Sigmoid colon (tissue), 7 donors: ENCODE measurements at regions of chr12 and their contacts with region 1.

Region 1: DNA sequence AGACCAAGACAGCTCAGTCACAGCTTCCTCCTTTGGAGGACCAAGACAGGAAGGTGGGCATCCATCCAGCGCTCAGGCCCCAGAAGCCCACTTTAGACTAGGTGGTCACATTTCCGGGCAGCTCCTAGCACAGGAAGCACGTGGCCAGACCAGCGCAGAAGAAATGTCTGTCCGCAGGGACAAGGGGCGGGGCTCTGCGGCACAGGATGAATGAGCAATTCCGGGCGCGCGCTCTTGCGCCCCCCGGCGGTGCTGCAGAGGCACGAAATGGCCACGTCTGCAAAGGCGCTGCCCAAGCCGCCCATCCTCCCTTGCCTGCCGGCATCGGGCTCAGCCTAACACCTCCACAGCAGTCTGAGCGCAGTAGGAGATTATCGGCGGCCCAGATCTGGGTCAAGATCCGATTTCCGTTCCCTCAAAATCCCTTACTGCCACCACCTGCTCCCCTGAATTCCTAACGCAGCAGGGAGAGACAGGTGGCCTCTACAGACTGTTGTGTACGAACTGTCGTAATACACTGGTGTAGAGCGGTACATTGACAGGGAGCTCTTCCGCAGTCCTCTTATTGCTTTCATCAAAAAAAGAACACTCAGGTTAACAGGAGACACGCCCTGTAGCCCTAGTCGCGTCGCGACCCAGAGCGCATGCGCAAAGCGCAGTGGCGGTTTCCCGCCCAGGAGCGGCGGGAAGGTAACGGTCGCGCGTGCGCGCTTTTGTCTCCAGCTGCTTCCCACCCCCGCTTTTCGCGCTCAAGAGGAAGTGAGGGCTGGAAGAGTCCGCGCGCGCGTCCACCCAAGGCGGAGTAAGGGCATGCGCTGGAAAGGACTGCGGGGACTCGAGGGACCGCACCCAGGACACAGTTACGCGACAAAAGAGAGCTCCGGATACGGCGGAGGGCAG is 794 bp downstream of the TUBA1B start:
- DNase-seq: peak; percentile 97
- H3K4me3 ChIP-seq: peak overlapping the region; percentile 94 to 99 (median 98)
- H3K27ac ChIP-seq: peak overlapping the region; percentile 99 to 100 (median 100)
- H3K4me1 ChIP-seq: peaks cover 0 to 30% (median 27%) of the 10 kb centered on the region in 4 donors
- H3K27me3 ChIP-seq: no peaks in the 10 kb centered on the region
- CTCF ChIP-seq: peak; percentile 82 to 96 (median 90)
- EP300 ChIP-seq: no peak
- POLR2A ChIP-seq: no peak

Region 2: DNA sequence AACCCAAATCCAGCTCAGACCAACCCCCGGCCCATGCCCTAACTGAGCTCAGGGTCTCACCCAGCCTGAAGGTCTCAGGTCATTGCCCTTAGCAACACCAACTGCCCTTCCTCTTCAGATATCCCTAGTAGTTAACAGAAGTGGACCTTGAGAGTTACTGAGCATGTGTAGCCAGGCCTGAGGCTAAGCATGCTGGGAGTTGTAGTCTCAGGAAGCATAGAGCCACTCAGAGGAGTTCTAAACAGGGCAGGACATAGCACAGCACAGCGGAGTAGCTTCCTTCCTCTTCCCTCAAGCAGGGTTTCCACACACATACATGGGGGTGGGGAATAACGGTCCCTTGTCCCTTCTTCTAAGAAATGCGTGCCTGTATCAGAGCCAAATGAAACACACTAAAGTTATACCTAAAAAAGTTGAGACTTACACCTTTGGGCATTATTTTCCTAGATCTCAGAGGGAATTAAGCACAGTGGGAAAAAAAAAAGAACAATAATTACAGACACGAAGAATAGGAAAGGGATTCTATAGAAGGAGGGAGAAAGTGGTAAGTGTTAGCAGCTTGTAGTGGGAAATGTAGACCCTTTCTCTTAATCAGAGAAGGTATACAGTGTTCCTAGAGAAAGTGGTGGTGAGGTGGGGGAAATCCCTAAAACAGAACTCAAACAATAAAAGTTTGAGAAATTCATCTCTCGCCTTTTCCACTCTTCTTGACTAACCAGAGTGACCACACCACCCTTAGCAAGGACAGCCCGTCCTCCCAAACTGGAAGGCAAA is 74.2 kb before region 1 on chr12:
- intact Hi-C with region 1: no loop called
- DNase-seq: peak; percentile 82
- H3K4me3 ChIP-seq: peak overlapping the region in 2 of 4 donors; percentile 5 to 95
- H3K27ac ChIP-seq: peak overlapping the region in 3 of 4 donors; percentile 26 to 99 (median 94)
- H3K4me1 ChIP-seq: peaks cover 0 to 56% (median 45%) of the 10 kb centered on the region in 4 donors
- H3K27me3 ChIP-seq: no peaks in the 10 kb centered on the region
- CTCF ChIP-seq: no peak
- EP300 ChIP-seq: no peak
- POLR2A ChIP-seq: no peak

Region 3: GRCh38 chr12:49110464-49111155 is 19.8 kb before region 1 on chr12 and contains the start of gene LMBR1L:
- intact Hi-C with region 1: loop called (anchors 2 kb)
- DNase-seq: peak; percentile 99
- H3K4me3 ChIP-seq: peak within 1 kb of the TSS; percentile 72 to 96 (median 82)
- H3K27ac ChIP-seq: peak within 1 kb of the TSS; percentile 94 to 99 (median 97)
- H3K4me1 ChIP-seq: peaks cover 0 to 48% (median 45%) of the 10 kb centered on the region in 4 donors
- H3K27me3 ChIP-seq: no peaks in the 10 kb centered on the region
- CTCF ChIP-seq: peak in 3 of 4 experiments; percentile 41 to 76 (median 64)
- EP300 ChIP-seq: no peak
- POLR2A ChIP-seq: peak; percentile 87 to 92
- total RNA-seq, gene LMBR1L: 34.6 to 82.3 (median 51.5) TPM